Mammary epithelial cell (primary cell): ENCODE measurements at regions of chr12 and their contacts with region 1.

Region 1: DNA sequence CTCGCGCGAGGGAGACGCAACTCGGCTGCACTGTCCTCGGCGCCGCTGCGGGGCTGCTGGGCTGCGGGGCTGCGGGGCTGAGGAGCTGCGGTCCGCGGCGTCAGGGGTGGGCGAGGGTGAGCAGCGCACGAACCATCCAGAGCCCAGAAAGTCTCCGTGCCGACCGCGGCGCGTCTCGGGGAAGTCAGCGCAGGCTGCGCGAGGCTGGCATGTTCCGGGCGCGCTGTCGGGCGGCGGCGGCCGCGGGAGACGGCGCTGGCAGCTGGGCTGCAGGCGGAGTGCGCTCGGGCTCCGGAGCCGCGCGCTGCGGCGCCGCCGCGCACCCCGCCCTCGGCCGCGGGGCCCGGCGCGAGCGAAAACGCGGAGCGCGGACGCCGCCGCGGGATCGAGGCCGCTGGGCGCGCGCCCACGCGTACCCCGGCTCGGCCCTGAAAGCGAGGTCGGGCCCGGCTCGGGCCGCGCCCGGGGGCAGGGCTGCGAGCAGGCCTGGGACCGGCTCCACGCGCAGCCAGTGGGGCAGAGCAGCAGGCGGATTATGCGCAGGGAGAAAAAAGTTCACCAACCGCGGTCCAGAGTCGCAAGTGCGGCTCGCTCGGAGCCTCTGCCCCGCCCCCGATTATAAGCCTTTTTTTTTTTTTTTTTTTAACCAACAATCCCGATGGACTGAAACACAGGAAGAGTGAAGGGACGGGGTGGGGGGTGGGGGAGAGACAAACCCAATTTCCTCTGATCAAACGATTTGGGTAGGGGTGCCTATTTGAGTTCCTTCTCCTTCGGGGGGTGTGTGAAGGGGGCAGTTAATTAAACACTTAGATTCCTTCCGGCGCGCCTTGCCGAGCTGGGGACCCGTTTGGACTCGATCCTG is at the start of gene PRICKLE1:
- DNase-seq: peak; percentile 64
- H3K4me3 ChIP-seq: peak within 1 kb of the TSS; percentile 91 to 97 (median 95)
- H3K27ac ChIP-seq: peak within 1 kb of the TSS; percentile 67
- H3K4me1 ChIP-seq: peaks cover 22% of the 10 kb centered on the region
- H3K27me3 ChIP-seq: no peaks in the 10 kb centered on the region
- CTCF ChIP-seq: no peak
- total RNA-seq, gene PRICKLE1: 18.4 to 43.2 TPM

Region 2: GRCh38 chr12:42705863-42706262 is 116.2 kb after region 1 on chr12:
- CTCF ChIA-PET with region 1: no interaction called
- dilution Hi-C with region 1: no loop called
- in situ Hi-C with region 1: no loop called
- intact Hi-C with region 1: no loop called
- DNase-seq: peak; percentile 76
- H3K4me3 ChIP-seq: no peak overlapping the region
- H3K27ac ChIP-seq: peak overlapping the region; percentile 43
- H3K4me1 ChIP-seq: peaks cover 29% of the 10 kb centered on the region
- H3K27me3 ChIP-seq: no peaks in the 10 kb centered on the region
- CTCF ChIP-seq: no peak

Region 3: GRCh38 chr12:42756841-42757661 is 167.4 kb after region 1 on chr12:
- CTCF ChIA-PET with region 1: no interaction called
- dilution Hi-C with region 1: no loop called
- in situ Hi-C with region 1: no loop called
- intact Hi-C with region 1: loop called (anchors 1 kb)
- DNase-seq: peak; percentile 98
- H3K4me3 ChIP-seq: no peak overlapping the region
- H3K27ac ChIP-seq: peak overlapping the region; percentile 84
- H3K4me1 ChIP-seq: peaks cover 54% of the 10 kb centered on the region
- H3K27me3 ChIP-seq: no peaks in the 10 kb centered on the region
- CTCF ChIP-seq: no peak

Region 4: DNA sequence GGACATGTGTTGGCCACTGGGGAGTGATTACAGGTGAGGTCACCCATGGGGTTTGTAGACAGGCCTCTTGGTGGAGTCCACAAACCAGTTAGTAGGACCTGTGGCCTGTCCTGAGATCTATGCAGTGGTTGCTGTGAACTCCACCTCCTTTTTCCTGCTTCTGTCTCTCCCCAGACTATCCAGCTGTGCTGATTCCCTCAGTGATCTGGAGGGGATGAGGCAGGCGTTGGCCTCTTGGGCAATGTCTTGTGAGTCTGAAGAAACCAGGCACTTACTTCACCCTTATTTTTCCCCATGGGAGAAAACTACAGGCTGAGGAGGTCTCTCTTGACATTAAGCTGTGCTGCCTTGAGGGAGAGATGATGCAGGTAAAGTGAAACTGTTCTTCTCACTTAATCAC is 257.1 kb after region 1 on chr12:
- CTCF ChIA-PET with region 1: interaction called, 21 read pairs
- dilution Hi-C with region 1: no loop called
- in situ Hi-C with region 1: no loop called
- intact Hi-C with region 1: no loop called
- DNase-seq: peak; percentile 9
- H3K4me3 ChIP-seq: no peak overlapping the region
- H3K27ac ChIP-seq: no peak overlapping the region
- H3K4me1 ChIP-seq: peaks cover 3% of the 10 kb centered on the region
- H3K27me3 ChIP-seq: no peaks in the 10 kb centered on the region
- CTCF ChIP-seq: no peak

Region 5: GRCh38 chr12:43097471-43097870 is 507.8 kb after region 1 on chr12:
- CTCF ChIA-PET with region 1: no interaction called
- dilution Hi-C with region 1: no loop called
- in situ Hi-C with region 1: no loop called
- intact Hi-C with region 1: loop called (anchors 1 kb)
- DNase-seq: no peak
- H3K4me3 ChIP-seq: no peak overlapping the region
- H3K27ac ChIP-seq: no peak overlapping the region
- H3K4me1 ChIP-seq: no peaks in the 10 kb centered on the region
- H3K27me3 ChIP-seq: no peaks in the 10 kb centered on the region
- CTCF ChIP-seq: no peak

Region 6: GRCh38 chr12:43282106-43282505 is 692.4 kb after region 1 on chr12:
- CTCF ChIA-PET with region 1: interaction called, 7 read pairs
- dilution Hi-C with region 1: no loop called
- in situ Hi-C with region 1: loop called (anchors 5 to 10 kb)
- intact Hi-C with region 1: loop called (anchors 1 kb)
- DNase-seq: no peak
- H3K4me3 ChIP-seq: no peak overlapping the region
- H3K27ac ChIP-seq: no peak overlapping the region
- H3K4me1 ChIP-seq: peaks cover 35% of the 10 kb centered on the region
- H3K27me3 ChIP-seq: no peaks in the 10 kb centered on the region
- CTCF ChIP-seq: peak; percentile 36 to 48